ENCODE measurements at regions of chr3 and their contacts with region 1.

Region 1: DNA sequence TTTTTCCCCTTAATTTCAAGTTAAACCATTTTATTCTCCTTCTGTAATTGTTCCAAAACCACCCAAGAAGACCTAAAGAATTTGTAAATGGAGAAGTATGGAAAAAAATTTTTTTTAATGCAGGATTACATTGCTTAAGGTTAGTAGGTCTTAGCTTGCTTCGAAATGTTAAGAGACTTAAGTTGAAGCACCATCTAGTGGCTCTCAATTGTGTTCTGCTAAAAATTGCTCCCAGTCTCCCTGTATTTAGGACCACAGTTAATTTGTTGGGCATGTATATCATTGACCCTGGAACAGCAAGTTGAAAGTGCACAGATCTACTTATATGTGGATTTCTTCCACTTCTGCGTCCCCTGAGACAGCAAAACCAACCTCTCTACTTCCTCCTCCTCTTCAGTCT is 32.4 kb downstream of the CD200R1L start:
- DNase-seq: no peak
- ATAC-seq: peak; percentile 26
- H3K4me3 Mint-ChIP-seq: peak overlapping the region; percentile 58
- H3K27ac Mint-ChIP-seq: peak overlapping the region; percentile 79
- H3K4me1 Mint-ChIP-seq: peaks cover 48% of the 10 kb centered on the region
- H3K27me3 Mint-ChIP-seq: no peaks in the 10 kb centered on the region
- CTCF ChIP-seq: no peak

Region 2: DNA sequence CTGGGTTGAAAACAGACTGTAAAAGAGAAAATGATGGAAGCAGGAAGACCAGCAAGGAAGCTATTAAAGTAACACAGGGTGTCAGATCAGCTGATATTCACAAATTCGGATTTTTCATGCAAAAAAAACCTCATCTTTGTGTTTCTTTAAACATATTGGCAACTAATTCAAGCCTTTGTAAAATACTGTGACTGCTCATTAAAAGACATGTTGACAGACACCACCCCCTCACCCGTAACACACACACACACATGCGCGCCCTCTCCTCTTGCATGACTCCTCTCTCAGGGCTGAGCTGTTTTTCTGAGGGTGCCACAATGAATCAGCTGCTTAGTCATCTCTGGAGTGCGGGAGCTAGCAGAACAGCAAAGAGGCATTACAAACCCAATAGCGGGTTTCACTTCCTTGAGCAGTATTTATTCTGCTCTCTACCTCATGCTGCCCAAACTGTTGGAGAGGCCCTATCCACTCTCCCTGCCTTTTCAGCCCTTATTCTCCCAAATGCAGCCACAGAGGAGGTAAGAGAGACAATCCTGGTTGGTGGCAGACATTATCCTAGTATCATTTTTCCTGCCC is 137.5 kb before region 1 on chr3:
- CTCF ChIA-PET with region 1: no interaction called
- POLR2A ChIA-PET with region 1: interaction called, 3 read pairs
- intact Hi-C with region 1: loop called (anchors 1 kb)
- DNase-seq: peak; percentile 57
- ATAC-seq: peak; percentile 98
- H3K4me3 Mint-ChIP-seq: peak overlapping the region; percentile 67
- H3K27ac Mint-ChIP-seq: peak overlapping the region; percentile 84
- H3K4me1 Mint-ChIP-seq: peaks cover 25% of the 10 kb centered on the region
- H3K27me3 Mint-ChIP-seq: peaks cover 8% of the 10 kb centered on the region
- CTCF ChIP-seq: no peak

Region 3: GRCh38 chr3:112794622-112795172 is 19.6 kb before region 1 on chr3:
- CTCF ChIA-PET with region 1: interaction called, 3 read pairs
- POLR2A ChIA-PET with region 1: no interaction called
- intact Hi-C with region 1: loop called (anchors 2 kb)
- DNase-seq: no peak
- ATAC-seq: peak; percentile 31
- H3K4me3 Mint-ChIP-seq: peak overlapping the region; percentile 12
- H3K27ac Mint-ChIP-seq: peak overlapping the region; percentile 46
- H3K4me1 Mint-ChIP-seq: peaks cover 27% of the 10 kb centered on the region
- H3K27me3 Mint-ChIP-seq: no peaks in the 10 kb centered on the region
- CTCF ChIP-seq: no peak

Region 4: DNA sequence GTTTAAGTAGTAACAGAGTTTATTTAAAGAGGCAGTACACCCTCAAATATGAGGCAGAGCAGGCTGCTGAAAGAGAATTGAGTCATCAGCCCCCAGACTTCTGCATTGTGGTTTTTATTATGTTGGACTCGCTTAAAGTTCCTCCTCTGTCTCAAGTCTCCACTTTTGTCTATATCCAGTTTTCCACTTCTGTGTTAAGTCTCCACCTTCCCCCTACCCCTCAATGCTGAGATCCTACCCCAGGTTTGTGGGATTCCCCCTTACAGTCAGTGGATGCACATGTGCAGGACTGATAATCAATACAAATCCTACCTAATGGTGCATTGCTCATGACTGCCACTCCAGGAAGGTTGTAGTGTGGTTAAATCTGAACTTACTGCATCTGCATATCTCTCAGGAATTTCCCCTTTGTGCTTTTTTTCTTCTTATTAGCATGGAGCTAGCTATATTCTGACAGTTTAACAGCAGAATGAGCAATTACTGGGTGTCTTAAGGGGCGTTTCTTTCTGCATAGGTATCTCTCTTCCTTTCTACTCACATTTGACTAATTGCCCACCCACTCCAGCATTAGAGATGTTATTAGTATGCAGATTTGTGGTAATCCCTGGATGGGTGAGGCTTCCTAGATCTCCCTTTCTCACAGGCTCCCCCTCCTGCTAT is 44.3 kb after region 1 on chr3:
- CTCF ChIA-PET with region 1: no interaction called
- POLR2A ChIA-PET with region 1: no interaction called
- intact Hi-C with region 1: loop called (anchors 1 kb)
- DNase-seq: peak; percentile 32
- ATAC-seq: peak; percentile 76
- H3K4me3 Mint-ChIP-seq: peak overlapping the region; percentile 69
- H3K27ac Mint-ChIP-seq: peak overlapping the region; percentile 89
- H3K4me1 Mint-ChIP-seq: peaks cover 45% of the 10 kb centered on the region
- H3K27me3 Mint-ChIP-seq: no peaks in the 10 kb centered on the region
- CTCF ChIP-seq: no peak

Region 5: GRCh38 chr3:112958811-112959560 is 144.7 kb after region 1 on chr3:
- CTCF ChIA-PET with region 1: no interaction called
- POLR2A ChIA-PET with region 1: no interaction called
- intact Hi-C with region 1: no loop called
- DNase-seq: no peak
- ATAC-seq: peak; percentile 42
- H3K4me3 Mint-ChIP-seq: peak overlapping the region; percentile 68
- H3K27ac Mint-ChIP-seq: peak overlapping the region; percentile 41
- H3K4me1 Mint-ChIP-seq: peaks cover 30% of the 10 kb centered on the region
- H3K27me3 Mint-ChIP-seq: no peaks in the 10 kb centered on the region
- CTCF ChIP-seq: no peak

Region 6: DNA sequence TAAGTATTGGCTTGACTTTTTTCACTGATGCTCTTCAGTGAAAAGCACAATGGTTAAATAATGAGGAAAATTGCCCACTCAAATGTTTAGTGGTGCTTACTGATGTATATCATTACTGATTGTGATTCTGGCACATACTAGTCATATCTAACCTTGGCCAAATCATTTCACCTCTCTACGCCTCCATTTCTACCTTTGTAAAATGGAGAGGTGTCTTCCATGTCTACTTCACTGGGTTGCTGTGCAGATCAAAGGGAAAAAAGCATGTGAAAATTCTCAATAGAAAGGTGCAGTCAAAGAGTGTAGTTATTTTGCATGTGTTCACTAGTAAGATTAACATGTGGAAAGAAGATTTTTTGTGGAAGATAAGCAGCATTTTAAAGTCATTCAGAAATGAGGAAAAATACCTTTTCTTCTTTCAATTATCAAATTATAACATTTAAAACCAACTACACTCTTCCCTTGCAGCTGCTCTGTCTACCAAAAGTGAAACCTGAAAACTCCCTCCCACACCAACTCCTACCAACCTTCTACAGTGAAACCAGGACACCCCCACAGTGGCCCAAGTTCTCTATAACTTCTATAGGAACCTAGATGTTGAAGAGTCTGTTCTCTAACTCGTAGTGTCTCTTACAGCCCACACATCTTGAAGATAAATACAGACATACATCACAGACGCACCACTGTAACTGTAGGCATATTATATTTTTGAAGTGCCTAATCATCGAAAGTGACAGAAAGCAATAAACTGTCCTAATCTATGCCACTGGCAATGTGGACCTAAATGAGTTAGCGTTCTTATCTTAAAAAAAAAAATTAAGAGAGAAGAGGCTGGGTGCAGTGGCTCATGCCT is 159.3 kb after region 1 on chr3:
- CTCF ChIA-PET with region 1: interaction called, 6 read pairs
- POLR2A ChIA-PET with region 1: interaction called, 7 read pairs
- intact Hi-C with region 1: loop called (anchors 2 kb)
- DNase-seq: no peak
- ATAC-seq: peak; percentile 75
- H3K4me3 Mint-ChIP-seq: peak overlapping the region; percentile 84
- H3K27ac Mint-ChIP-seq: peak overlapping the region; percentile 76
- H3K4me1 Mint-ChIP-seq: peaks cover 80% of the 10 kb centered on the region
- H3K27me3 Mint-ChIP-seq: no peaks in the 10 kb centered on the region
- CTCF ChIP-seq: no peak

Region 7: DNA sequence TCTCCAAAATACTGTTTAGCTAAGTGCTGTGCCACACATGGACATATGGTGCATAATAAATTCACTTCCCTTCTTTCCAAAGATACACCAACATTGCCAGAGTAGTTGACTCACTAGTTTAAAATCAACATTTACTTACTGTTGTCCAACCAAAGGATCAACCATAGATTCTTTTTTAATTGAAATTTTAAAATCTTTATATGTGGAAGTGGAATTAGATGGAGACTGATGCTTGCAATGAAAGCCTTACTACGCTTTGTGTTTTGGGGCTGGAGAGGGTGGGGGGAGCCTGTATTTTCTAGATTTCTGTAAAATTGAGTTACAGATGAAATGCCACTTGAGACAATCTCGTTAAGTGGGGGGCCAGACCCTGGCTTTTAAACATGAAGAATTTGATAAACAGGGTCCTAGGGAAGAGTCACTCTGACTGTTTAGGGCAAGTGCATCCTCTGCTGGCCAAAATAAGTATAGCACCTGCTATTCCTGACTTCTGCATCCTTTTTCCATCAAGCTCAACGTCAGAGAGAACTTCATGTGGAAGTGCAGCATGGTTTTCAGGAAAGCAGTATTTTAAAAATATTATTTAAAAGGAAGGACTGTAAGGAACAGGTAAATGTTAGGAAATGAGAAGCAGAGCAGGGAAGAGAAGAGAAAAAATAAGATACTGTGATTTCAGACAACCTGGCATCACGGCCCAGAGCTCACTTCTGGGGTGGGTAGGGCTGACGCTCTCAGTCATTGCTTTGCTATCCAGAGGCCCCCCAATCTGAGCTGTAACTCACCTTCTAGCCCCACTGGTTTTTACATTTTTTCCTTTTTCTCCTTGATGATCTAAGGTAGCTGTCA is 473.8 kb after region 1 on chr3:
- CTCF ChIA-PET with region 1: no interaction called
- POLR2A ChIA-PET with region 1: no interaction called
- intact Hi-C with region 1: no loop called
- DNase-seq: no peak
- ATAC-seq: peak; percentile 45
- H3K4me3 Mint-ChIP-seq: no peak overlapping the region
- H3K27ac Mint-ChIP-seq: no peak overlapping the region
- H3K4me1 Mint-ChIP-seq: no peaks in the 10 kb centered on the region
- H3K27me3 Mint-ChIP-seq: no peaks in the 10 kb centered on the region
- CTCF ChIP-seq: peak; percentile 59

Measured in activated B cell treated with CpG ODN at 0.5 μM for 24 hours (primary cell).